ENCODE measurements at regions of chr11 and their contacts with region 1.

Region 1: GRCh38 chr11:18000760-18001159 is 12.1 kb downstream of the SERGEF start:
- DNase-seq: no peak
- ATAC-seq: no peak
- H3K4me3 Mint-ChIP-seq: no peak overlapping the region
- H3K27ac Mint-ChIP-seq: no peak overlapping the region
- H3K4me1 Mint-ChIP-seq: peaks cover 3% of the 10 kb centered on the region
- H3K27me3 Mint-ChIP-seq: no peaks in the 10 kb centered on the region

Region 2: DNA sequence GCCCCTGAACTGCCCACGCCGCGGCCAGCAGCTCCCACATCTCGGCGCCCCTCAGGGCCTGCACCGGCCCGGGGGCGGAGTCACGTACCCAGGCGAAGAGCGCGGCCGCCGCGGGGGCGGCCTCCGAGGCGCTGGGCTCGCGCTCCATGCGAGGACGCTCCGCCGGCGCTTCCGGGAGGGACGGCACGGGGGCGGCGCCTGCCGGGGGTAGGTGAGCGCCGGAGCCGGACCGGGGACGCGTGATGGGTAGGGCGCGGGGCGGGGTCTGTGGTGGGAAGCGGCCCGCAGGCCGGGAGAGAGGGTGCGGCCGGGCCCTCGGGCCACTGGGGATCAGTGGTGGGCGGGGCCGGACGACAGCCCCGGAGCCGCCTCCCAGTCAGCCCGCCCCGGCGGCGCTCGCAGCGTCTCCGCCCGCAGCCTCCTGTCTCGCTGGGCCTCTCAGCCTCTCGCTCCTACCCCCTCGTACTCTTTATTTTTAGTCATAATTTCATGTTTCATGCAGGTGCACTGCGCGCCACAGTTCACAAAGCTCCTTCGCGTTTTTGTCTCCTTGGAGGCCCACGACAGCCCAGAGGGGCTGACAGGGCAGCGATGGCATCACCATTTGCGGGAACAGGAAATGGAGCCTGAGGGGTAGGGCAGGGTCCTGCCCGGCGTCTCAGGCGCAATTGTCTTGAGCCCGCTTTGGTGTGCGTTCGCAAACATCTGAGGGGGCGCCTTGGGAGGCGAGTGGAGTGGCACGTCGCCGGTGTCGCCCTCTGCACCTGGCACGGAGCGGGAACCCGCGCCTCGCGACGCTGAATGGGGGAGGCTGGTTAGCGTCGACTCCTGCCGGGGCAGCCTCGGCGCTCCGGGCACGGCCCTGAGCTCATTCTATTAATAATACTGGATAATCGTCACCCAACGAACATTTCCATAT is 12.4 kb after region 1 on chr11 and contains the start of gene SERGEF:
- CTCF ChIA-PET with region 1: no interaction called
- POLR2A ChIA-PET with region 1: interaction called, 10 read pairs
- DNase-seq: peak; percentile 95
- ATAC-seq: peak; percentile 94
- H3K4me3 Mint-ChIP-seq: peak within 1 kb of the TSS; percentile 90
- H3K27ac Mint-ChIP-seq: peak within 1 kb of the TSS; percentile 95
- H3K4me1 Mint-ChIP-seq: peaks cover 34% of the 10 kb centered on the region
- H3K27me3 Mint-ChIP-seq: no peaks in the 10 kb centered on the region
- total RNA-seq, gene SERGEF: 31.9 to 35.4 TPM